Right ventricle myocardium inferior (tissue), 1 donor: ENCODE measurements at regions of chr7 and their contacts with region 1.

Region 1: GRCh38 chr7:87152107-87152844 is at the start of gene DMTF1:
- DNase-seq: peak; percentile 97
- ATAC-seq: peak; percentile 98
- total RNA-seq, gene DMTF1: 22.1 TPM

Region 2: GRCh38 chr7:86939197-86939814 is 213.0 kb before region 1 on chr7:
- intact Hi-C with region 1: loop called (anchors 2 kb)
- DNase-seq: no peak
- ATAC-seq: peak; percentile 72

Region 3: GRCh38 chr7:87059525-87060287 is 92.6 kb before region 1 on chr7 and contains the start of gene ELAPOR2:
- intact Hi-C with region 1: loop called (anchors 5 kb)
- DNase-seq: peak; percentile 85
- ATAC-seq: peak; percentile 98
- total RNA-seq, gene ELAPOR2: 6.4 TPM

Region 4: DNA sequence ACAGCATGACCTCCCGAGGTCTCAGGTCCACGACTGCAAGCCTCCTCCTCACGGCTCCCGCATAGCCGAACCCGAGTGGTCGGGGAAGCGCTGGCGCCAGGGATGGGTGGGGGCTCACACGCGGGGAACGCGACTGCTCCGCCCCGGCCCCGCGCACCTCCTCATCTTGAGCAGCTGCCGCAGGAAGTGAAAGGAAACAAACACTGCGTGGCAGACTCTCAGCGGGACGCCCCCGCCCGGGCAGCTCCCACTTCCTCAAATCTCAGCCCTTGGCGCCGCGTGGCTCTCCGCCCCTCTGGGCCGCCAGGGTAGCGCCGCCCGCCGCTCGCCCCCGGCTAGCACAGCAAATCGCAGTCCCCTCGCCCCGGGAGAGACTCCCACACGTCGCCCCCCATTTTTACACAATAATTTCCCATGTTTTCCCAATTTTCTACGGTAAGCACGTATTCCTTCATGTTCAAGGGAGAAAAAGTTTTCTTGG is 67.3 kb after region 1 on chr7 and contains the start of gene TMEM243:
- intact Hi-C with region 1: loop called (anchors 5 kb)
- DNase-seq: peak; percentile 92
- ATAC-seq: peak; percentile 91
- total RNA-seq, gene TMEM243: 5.9 TPM

Region 5: GRCh38 chr7:87328281-87328680 is 176.0 kb after region 1 on chr7:
- intact Hi-C with region 1: no loop called
- DNase-seq: no peak
- ATAC-seq: no peak

Region 6: GRCh38 chr7:87345166-87345927 is 193.1 kb after region 1 on chr7 and contains the start of gene CROT:
- intact Hi-C with region 1: loop called (anchors 5 kb)
- DNase-seq: peak; percentile 98
- ATAC-seq: peak; percentile 100
- total RNA-seq, gene CROT: 6.9 TPM

Region 7: DNA sequence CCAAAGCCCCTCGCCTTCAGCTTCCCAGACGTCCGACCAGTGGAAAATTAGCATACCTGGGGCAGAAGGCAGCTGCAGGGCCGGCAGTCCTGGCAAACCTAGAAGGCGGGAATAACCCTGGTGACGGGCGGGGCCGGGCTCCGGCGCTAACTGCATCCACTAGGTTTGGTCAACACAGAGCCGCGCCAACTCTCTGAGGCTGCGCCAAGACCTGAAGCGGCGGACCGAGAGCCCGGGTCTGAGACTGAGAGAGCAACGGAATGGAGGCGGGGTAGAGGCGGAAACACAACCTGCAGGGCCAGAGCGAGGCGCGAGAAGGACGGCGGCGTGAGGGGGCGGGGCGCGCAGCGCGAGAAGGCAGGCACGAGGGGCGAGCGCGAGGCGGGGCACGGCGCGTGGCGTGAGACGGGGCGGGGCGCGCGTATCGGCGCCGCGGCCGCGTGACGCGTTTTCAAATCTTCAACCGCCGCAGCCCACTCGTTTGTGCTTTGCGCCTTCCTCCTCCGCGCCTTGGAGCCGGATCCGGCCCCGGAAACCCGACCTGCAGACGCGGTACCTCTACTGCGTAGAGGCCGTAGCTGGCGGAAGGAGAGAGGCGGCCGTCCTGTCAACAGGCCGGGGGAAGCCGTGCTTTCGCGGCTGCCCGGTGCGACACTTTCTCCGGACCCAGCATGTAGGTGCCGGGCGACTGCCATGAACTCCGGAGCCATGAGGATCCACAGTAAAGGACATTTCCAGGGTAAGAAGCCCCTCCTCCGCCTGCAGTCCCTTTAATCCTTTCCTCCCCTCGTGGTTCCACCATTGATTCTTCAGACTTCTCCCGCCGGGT is 724.0 kb after region 1 on chr7 and contains the starts of genes DBF4 and SLC25A40:
- intact Hi-C with region 1: loop called (anchors 10 kb)
- DNase-seq: peak; percentile 98
- ATAC-seq: peak; percentile 100
- total RNA-seq, gene DBF4: 1.4 TPM
- total RNA-seq, gene SLC25A40: 23.5 TPM